ENCODE measurements at regions of chr20 and their contacts with region 1.

Region 1: DNA sequence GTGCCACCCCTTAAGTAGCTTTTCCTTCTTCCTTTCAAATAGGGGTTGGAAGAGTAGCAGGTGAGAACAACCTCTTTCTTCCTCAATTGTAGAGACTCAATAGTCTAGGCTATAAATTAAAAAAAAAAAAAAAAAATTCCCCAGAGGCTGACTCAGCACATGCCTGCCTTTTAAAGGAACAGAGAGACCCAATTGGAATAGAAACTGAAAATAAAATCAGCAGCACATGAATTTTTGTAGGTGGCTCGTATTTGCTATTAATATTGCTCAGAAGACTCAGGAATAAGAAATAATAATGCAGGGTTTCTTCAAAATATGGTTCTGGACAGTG is 19.3 kb downstream of the TOP1 start:
- DNase-seq: peak; percentile 75
- H3K4me3 Mint-ChIP-seq: peak overlapping the region; percentile 86
- H3K27ac Mint-ChIP-seq: peak overlapping the region; percentile 81
- H3K4me1 Mint-ChIP-seq: peaks cover 72% of the 10 kb centered on the region
- H3K27me3 Mint-ChIP-seq: no peaks in the 10 kb centered on the region

Region 2: GRCh38 chr20:40990542-40991120 is 57.3 kb before region 1 on chr20:
- intact Hi-C with region 1: loop called (anchors 2 kb)
- DNase-seq: peak; percentile 91
- H3K4me3 Mint-ChIP-seq: peak overlapping the region; percentile 53
- H3K27ac Mint-ChIP-seq: peak overlapping the region; percentile 80
- H3K4me1 Mint-ChIP-seq: peaks cover 29% of the 10 kb centered on the region
- H3K27me3 Mint-ChIP-seq: no peaks in the 10 kb centered on the region

Region 3: DNA sequence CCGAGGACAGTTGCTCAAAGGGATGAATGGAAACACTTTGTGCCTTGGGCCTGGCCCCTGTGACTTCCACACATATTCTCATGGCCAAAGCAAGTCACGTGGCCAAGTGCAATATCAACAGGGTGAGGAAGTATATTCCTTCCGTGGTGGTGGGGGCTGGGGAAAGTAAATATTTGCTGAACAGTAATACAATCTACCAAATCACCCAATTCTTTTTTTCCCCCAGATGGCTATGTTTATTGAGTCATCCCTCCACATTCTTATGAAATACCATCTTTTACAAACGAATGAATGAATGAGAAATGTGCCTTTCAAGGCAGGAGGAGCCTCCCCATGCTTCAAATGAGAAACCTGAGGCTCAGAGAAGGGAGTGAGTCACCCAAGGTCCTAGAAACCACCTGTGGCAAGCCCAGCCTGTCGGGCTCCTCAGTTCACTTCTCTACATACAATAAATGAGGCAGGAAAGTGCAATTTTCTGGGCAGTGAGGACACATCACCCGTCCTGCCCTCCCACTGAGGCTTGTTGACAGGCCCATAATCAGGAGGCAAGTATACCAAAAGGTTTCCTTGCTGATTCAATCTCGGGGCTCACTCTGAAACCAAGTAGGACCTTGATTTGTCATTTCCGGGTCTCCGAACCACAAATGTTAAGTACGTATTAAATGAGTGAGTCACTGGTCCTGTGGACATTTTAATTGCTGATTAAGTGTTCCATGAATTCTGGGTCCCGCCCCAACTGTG is 44.6 kb before region 1 on chr20:
- intact Hi-C with region 1: loop called (anchors 1 kb)
- DNase-seq: peak; percentile 88
- H3K4me3 Mint-ChIP-seq: peak overlapping the region; percentile 72
- H3K27ac Mint-ChIP-seq: peak overlapping the region; percentile 95
- H3K4me1 Mint-ChIP-seq: peaks cover 44% of the 10 kb centered on the region
- H3K27me3 Mint-ChIP-seq: no peaks in the 10 kb centered on the region

Region 4: DNA sequence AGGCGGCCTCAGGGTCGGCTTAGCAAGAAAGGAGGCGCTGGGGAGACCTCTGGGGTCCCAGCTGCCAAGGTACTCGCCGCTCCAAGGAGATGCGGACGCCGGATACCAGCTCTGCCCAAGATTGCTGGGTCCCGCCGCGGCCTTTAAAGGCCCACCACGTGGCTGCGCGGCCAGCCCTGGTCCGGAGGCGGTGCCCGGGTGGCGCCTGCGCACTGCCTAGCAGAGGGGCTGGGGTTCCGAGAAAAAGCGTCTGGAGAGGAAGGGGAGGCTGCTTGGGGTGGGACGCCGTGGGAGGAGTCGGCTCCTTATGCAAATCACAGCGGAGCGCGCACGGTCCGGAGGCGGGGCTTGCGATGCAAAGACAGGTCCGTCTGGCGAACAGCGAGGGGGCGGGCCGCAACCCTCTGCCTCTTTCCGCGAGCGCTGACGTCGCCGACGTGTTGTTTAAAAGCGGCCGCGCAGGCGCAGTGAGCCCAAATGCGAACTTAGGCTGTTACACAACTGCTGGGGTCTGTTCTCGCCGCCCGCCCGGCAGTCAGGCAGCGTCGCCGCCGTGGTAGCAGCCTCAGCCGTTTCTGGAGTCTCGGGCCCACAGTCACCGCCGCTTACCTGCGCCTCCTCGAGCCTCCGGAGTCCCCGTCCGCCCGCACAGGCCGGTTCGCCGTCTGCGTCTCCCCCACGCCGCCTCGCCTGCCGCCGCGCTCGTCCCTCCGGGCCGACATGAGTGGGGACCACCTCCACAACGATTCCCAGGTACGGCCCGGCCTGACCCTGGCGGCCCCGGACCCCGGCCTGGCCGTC is 19.4 kb before region 1 on chr20 and contains the start of gene TOP1:
- intact Hi-C with region 1: loop called (anchors 1 kb)
- DNase-seq: peak; percentile 100
- H3K4me3 Mint-ChIP-seq: peak within 1 kb of the TSS; percentile 84
- H3K27ac Mint-ChIP-seq: peak within 1 kb of the TSS; percentile 95
- H3K4me1 Mint-ChIP-seq: peaks cover 42% of the 10 kb centered on the region
- H3K27me3 Mint-ChIP-seq: no peaks in the 10 kb centered on the region
- total RNA-seq, gene TOP1: 117 TPM in 2 replicates

Region 5: DNA sequence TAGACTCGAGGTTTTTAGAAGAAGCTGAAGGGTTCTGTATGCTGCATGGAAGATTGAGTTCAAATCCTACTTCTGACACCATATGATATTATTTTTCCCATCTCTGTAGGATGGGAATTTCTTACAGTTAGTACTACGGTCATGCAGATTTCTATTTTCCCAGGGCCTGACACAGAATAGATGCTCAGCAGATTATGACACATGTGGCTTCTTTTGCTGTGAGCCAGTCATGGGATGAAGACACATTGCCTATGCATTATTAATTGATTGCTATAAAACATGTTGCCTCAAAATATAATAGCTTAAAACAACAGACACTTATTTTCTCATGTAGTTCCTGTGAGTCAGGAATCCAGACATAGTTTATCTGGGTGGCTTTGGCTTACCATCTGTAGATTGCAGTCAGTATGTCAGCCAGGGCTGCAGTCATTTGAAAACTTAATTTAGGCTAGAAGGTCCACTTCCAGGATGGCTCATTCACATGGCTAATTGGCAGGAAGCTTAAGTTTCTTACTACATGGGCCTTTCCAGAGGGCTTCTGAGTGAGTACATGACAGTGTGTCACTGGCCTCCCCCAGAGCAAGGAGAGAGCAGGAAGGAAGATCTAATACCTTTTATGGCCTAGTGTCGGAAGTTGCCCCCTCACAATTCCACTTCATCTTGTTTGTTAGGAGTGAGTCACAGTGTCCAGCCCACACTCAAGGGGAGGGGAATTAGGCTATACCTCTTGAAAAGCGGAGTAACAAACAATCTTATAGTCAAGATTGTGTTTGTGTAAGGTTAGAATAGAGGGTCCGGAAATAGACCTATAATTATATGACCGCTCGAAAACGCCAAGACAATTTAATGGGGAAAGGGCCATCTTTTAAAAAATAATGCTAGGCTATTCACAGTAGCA is 10.3 kb after region 1 on chr20:
- intact Hi-C with region 1: loop called (anchors 1 kb)
- DNase-seq: no peak
- H3K4me3 Mint-ChIP-seq: no peak overlapping the region
- H3K27ac Mint-ChIP-seq: peak overlapping the region; percentile 46
- H3K4me1 Mint-ChIP-seq: peaks cover 44% of the 10 kb centered on the region
- H3K27me3 Mint-ChIP-seq: no peaks in the 10 kb centered on the region

Region 6: GRCh38 chr20:41078329-41078728 is 30.4 kb after region 1 on chr20:
- intact Hi-C with region 1: loop called (anchors 5 kb)
- DNase-seq: no peak
- H3K4me3 Mint-ChIP-seq: peak overlapping the region; percentile 38
- H3K27ac Mint-ChIP-seq: peak overlapping the region; percentile 59
- H3K4me1 Mint-ChIP-seq: peaks cover 62% of the 10 kb centered on the region
- H3K27me3 Mint-ChIP-seq: no peaks in the 10 kb centered on the region

Measured in activated CD4-positive, alpha-beta T cell treated with anti-CD3 and anti-CD28 coated beads, Interleukin-2, amount 10 ng/mL, durations not matched to agents 24 days and 14 days (primary cell).